Natural killer cell (primary cell): ENCODE measurements at regions of chr10 and their contacts with region 1.

Region 1: DNA sequence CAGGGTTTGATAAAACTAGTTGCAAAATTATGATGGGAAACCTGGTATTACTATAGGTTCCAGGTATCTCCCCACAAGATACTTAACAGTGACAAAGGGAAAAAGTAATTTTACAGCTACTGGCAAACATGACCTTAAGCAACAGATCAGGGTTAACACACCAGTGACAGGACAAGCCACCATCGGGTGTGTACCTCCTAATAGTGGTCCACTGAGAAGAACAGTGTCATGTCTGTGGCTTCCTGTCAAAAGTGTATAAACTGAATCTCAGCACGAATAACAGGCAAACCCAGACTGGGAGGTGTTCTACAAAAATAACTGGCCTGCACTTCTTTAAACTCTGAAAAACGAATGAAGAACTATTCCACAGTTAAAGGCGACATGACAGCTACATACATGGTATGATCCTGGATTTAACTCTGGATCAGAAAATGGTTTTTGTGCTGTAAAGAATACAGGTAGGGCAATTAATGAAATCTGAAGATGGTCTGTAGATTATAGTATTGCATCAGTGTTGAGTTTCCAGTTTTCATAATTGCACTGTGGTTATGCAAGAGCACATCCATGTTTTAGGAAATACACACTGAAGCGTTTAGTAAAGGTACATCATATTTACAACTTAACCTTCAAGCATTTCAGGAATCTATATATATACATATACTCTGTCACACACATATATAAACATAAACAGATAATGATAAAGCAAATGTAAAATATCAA is 32.0 kb upstream of the ARMS2 start:
- DNase-seq: peak; percentile 44 to 62
- ATAC-seq: peak; percentile 85 to 98 (median 94)
- H3K4me3 ChIP-seq: no peak overlapping the region
- H3K4me3 Mint-ChIP-seq: peak overlapping the region; percentile 81
- H3K27ac ChIP-seq: peak overlapping the region; percentile 60
- H3K27ac Mint-ChIP-seq: peak overlapping the region; percentile 83 to 96
- H3K4me1 ChIP-seq: peaks cover 31% of the 10 kb centered on the region
- H3K4me1 Mint-ChIP-seq: peaks cover 69 to 78% of the 10 kb centered on the region in 2 donors
- H3K27me3 ChIP-seq: no peaks in the 10 kb centered on the region
- H3K27me3 Mint-ChIP-seq: no peaks in the 10 kb centered on the region
- CTCF ChIP-seq: no peak

Region 2: DNA sequence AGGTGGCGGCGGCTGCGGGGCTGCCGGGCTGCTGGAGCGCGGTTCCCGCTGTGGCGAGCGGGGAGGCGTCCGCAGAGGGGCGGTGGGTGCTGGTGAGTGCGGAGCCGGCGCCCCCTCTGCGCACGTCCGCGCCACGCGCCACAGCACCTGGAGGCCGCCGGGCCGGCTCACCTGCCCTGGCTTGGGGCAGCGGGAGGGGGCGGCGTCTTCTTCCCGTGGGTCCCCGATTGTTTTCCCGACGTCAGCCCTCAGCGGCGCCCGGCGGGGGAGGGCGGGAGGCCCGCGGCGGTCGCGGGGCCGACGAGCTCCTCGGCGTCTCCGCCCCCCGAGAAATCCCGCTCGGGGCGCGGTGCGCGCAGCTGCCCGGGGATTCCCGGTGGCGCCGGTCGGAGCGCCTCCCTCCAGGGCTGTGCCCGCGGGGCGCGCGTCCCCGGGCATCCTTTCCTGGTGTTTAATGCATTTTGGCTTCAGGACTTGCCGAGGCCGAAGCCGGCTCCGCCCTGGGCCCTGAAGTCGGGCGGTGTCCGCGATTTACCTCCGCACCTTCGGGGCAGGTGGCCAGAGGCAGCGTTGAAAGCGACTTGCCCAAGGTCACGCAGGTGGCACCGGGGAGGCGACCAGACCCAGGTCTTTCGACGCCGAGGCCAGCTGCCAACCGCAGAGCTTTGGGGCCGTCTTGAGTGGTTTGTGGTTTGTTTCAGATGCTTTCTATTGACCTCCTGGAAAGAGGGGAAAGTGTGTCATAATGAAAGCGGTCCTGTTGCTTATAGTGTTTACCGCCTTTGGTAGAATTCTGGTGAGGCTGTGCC is 47.4 kb before region 1 on chr10:
- intact Hi-C with region 1: loop called (anchors 1 kb)
- DNase-seq: peak; percentile 83 to 93
- ATAC-seq: peak; percentile 69 to 84 (median 75)
- H3K4me3 ChIP-seq: peak overlapping the region; percentile 64
- H3K4me3 Mint-ChIP-seq: peak overlapping the region; percentile 97
- H3K27ac ChIP-seq: peak overlapping the region; percentile 86
- H3K27ac Mint-ChIP-seq: peak overlapping the region; percentile 98 to 99
- H3K4me1 ChIP-seq: peaks cover 8% of the 10 kb centered on the region
- H3K4me1 Mint-ChIP-seq: peaks cover 40 to 45% of the 10 kb centered on the region in 2 donors
- H3K27me3 ChIP-seq: no peaks in the 10 kb centered on the region
- H3K27me3 Mint-ChIP-seq: peaks cover 8 to 10% of the 10 kb centered on the region in 2 donors
- CTCF ChIP-seq: no peak

Region 3: DNA sequence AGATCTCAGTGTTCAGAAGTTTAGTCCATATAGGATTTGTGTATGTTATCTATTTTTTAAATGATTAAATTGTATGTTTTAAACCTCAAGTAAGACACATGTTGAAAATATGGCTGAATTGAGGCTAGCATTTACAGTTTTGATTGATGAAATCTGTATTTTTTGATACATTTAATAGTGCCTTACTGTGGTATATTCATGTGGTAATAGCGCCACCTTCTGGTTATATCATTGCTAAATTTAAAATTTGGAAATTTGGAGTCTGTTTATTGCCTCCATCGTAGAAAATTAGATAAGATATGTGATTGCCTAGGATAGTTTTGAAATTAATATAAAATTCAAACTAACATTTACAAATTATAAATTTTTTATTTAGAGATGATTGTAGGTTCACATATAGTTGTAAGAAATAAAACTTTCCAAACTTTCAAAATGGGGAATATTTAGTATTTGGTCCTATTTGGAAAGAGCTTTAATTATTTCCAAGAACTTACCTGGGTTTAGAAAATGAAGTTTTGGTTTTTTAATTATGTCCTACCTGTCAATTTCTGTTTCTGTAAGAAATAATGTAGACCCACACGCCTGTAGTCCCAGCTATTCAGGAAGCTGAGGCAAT is 12.9 kb after region 1 on chr10:
- intact Hi-C with region 1: no loop called
- DNase-seq: peak in 1 of 2 donors; percentile 78
- ATAC-seq: peak; percentile 42 to 67 (median 58)
- H3K4me3 ChIP-seq: no peak overlapping the region
- H3K4me3 Mint-ChIP-seq: no peak overlapping the region
- H3K27ac ChIP-seq: no peak overlapping the region
- H3K27ac Mint-ChIP-seq: no peak overlapping the region
- H3K4me1 ChIP-seq: no peaks in the 10 kb centered on the region
- H3K4me1 Mint-ChIP-seq: peaks cover 0 to 7% of the 10 kb centered on the region in 2 donors
- H3K27me3 ChIP-seq: no peaks in the 10 kb centered on the region
- H3K27me3 Mint-ChIP-seq: no peaks in the 10 kb centered on the region
- CTCF ChIP-seq: peak; percentile 89